Psoas muscle (tissue), 8 donors: ENCODE measurements at regions of chr3 and their contacts with region 1.

Region 1: GRCh38 chr3:194070634-194071409 is 65.1 kb upstream of the HES1 start:
- DNase-seq: peak; percentile 90 to 93
- ATAC-seq: peak; percentile 89 to 94 (median 91)
- H3K4me3 ChIP-seq: peak overlapping the region; percentile 62
- H3K27ac ChIP-seq: peak overlapping the region; percentile 87
- H3K4me1 ChIP-seq: peaks cover 18% of the 10 kb centered on the region
- H3K27me3 ChIP-seq: no peaks in the 10 kb centered on the region
- CTCF ChIP-seq: no peak

Region 2: GRCh38 chr3:193788189-193788991 is 282.4 kb before region 1 on chr3:
- intact Hi-C with region 1: loop called in 1 of 2 experiments (anchors 10 kb)
- DNase-seq: peak; percentile 50 to 75
- ATAC-seq: peak; percentile 95 to 99 (median 96)
- H3K4me3 ChIP-seq: no peak overlapping the region
- H3K27ac ChIP-seq: no peak overlapping the region
- H3K4me1 ChIP-seq: no peaks in the 10 kb centered on the region
- H3K27me3 ChIP-seq: peaks cover 0 to 4% (median 0%) of the 10 kb centered on the region in 3 donors
- CTCF ChIP-seq: peak; percentile 81

Region 3: DNA sequence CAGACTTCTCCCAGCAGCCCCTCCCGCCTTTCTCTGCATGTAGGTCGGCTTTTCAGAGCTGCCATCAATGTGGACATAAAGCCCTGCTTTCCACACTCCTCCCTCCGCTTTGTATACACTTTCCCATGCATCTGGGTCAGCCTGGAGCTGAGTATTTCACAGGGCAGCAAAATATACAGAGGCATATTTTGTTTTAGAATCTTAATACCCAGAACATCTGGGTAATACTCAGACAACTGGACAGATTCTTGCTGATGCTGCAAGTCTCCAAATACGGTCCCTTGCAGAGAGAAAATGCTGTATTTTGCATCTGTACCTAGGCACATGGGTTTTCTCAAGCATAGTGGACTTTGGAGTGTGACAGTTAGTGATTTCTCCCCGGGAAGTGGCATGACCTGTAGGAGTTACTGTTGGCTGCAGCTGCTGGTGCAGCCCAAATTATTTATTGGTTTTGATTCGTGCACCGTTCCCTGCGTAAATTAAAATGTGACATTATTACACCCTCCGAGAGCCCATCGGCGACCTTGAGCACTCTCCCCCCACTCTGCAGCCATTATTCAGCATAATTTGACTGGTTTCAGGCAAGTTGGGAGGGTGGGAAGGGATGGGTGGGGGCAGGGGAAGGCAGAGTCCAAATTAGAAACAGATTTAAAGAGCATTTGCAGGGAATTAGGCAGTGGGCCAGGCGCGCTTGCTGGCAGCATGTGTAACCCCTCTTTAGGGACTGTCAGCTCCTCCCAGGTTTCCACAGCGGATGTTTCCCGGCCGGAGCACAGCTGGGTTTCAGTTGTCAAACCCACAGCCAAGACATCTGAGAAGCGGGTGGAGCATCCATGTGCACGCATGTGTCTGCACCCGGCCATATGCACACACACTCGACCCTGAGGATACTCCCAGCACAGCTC is 179.5 kb after region 1 on chr3:
- intact Hi-C with region 1: loop called in 1 of 2 experiments (anchors 5 kb)
- DNase-seq: peak; percentile 74 to 86
- ATAC-seq: peak; percentile 77 to 86 (median 84)
- H3K4me3 ChIP-seq: no peak overlapping the region
- H3K27ac ChIP-seq: no peak overlapping the region
- H3K4me1 ChIP-seq: peaks cover 13% of the 10 kb centered on the region
- H3K27me3 ChIP-seq: peaks cover 0 to 3% (median 0%) of the 10 kb centered on the region in 3 donors
- CTCF ChIP-seq: no peak